Common myeloid progenitor, CD34-positive (primary cell): ENCODE measurements at regions of chr7 and their contacts with region 1.

Region 1: GRCh38 chr7:87001214-87001613 is 58.2 kb downstream of the ELAPOR2 start:
- DNase-seq: peak in 2 of 3 donors; percentile 18 to 34
- H3K4me3 ChIP-seq: no peak overlapping the region
- H3K27ac ChIP-seq: no peak overlapping the region
- H3K4me1 ChIP-seq: peaks cover 0 to 26% (median 3%) of the 10 kb centered on the region in 4 experiments
- H3K27me3 ChIP-seq: no peaks in the 10 kb centered on the region

Region 2: DNA sequence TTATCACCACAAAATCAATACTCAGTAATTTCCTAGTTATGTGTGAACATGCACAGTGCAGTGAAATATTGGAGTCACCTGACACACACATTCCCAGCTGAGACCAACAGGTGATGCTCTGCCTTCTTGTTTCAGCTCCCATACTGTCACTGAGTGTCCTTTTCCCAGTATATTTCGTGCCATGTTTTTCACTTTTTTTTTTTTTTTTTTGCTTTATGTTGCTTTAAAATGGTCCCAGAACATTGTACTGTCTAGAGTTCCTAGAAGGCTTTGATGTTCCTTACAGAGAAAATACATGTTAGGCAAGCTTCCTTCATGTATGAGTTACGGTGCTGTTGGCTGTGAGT is 12.6 kb after region 1 on chr7:
- CTCF ChIA-PET with region 1: interaction called, 10 read pairs
- POLR2A ChIA-PET with region 1: no interaction called
- DNase-seq: no peak
- H3K4me3 ChIP-seq: no peak overlapping the region
- H3K27ac ChIP-seq: no peak overlapping the region
- H3K4me1 ChIP-seq: peaks cover 0 to 2% (median 0%) of the 10 kb centered on the region in 4 experiments
- H3K27me3 ChIP-seq: no peaks in the 10 kb centered on the region

Region 3: DNA sequence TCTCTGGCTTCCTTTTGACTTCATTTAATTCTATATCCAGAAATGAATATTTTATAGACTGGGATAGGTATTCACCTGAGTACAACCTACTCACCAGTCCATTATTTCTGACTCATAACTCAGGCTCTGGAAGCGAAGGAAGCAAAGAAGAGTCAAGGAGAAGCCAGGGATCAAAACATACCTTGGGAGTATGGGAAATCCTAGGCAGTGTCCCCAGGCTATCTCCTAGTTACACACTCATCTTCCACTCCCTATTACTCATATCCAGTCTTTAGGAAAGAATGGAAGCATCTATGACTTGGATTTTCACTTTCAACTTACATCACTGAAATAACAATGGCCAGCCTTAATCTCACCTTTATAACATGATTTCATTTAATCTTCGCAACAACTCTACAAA is 99.1 kb after region 1 on chr7:
- CTCF ChIA-PET with region 1: no interaction called
- POLR2A ChIA-PET with region 1: no interaction called
- DNase-seq: no peak
- H3K4me3 ChIP-seq: no peak overlapping the region
- H3K27ac ChIP-seq: no peak overlapping the region
- H3K4me1 ChIP-seq: peaks cover 0 to 9% (median 4%) of the 10 kb centered on the region in 4 experiments
- H3K27me3 ChIP-seq: no peaks in the 10 kb centered on the region